Panc1 (cell line): ENCODE measurements at regions of chr11 and their contacts with region 1.

Region 1: GRCh38 chr11:77705195-77705876 is 67.7 kb upstream of the CLNS1A start:
- DNase-seq: peak; percentile 48
- ATAC-seq: peak; percentile 73; the same call in 1 of the 2 replicates
- H3K4me3 ChIP-seq: no peak overlapping the region
- H3K27ac ChIP-seq: no peak overlapping the region
- H3K4me1 ChIP-seq: 0 out of 2 replicates have a peak, but pooled peaks cover 3% of the 10 kb centered on the region
- H3K27me3 ChIP-seq: no peaks in the 10 kb centered on the region
- CTCF ChIP-seq: no peak

Region 2: DNA sequence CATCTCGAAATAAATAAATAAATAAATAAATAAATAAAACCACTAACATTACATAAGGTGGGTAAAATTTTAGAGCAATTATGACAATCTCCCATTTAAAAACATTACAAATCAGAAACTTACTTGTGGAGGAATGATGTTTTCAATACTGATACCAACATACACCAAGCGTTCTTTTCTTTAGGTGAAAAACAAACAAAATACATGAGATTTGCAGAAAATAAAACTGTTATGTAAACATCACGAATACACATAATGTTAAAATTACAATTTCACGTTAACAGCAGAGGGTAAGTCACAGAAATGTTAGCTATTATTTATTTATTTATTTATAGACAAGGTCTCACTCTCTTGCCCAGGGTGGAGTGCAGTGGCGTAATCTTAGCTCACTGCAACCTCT is 20.4 kb before region 1 on chr11:
- CTCF ChIA-PET with region 1: no interaction called
- POLR2A ChIA-PET with region 1: interaction called, 10 read pairs
- in situ Hi-C with region 1: no loop called
- intact Hi-C with region 1: no loop called
- DNase-seq: no peak
- ATAC-seq: no peak
- H3K4me3 ChIP-seq: no peak overlapping the region
- H3K27ac ChIP-seq: no peak overlapping the region
- H3K4me1 ChIP-seq: no peaks in the 10 kb centered on the region
- H3K27me3 ChIP-seq: no peaks in the 10 kb centered on the region
- CTCF ChIP-seq: no peak